Activated naive CD4-positive, alpha-beta T cell treated with anti-CD3 and anti-CD28 coated beads, Interleukin-2, amount 10 ng/mL, durations not matched to agents 7 days and 5 days (primary cell): ENCODE measurements at regions of chr12 and their contacts with region 1.

Region 1: DNA sequence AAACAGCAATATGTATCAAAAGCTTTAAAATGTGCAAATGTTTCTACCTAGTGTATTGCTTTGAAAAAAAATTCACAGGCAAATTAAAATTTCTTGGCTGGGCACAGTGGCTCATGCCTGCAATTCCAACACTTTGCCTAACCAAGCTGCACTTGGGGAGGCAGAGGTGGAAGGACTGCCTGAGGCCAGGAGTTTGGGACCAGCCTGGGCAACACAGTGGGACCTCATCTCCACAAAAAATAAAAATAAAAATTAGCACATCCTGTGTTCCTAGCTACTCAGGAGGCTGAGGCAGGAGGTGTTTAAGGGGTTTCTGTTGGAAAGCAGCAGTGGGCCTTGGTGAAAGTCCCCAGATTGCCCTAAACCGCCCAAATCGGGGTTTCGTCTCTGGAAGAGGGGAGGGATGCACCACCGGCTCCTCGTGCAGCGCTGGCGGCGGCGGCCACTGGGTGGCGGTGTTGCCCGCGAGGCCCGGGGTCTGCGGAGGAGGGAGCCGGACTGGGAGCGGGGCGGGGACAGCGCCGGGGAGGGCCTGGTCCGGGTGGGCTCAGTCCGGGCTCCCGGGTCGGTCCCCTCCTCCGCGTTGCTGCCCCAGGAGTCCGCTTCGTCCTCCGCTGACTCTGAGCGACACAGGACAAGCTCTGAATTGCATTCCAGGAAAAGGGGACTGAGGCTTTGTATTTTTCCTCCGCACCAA is 265.6 kb downstream of the AACS start:
- DNase-seq: peak; percentile 61
- H3K4me3 Mint-ChIP-seq: no peak overlapping the region
- H3K27ac Mint-ChIP-seq: no peak overlapping the region
- H3K4me1 Mint-ChIP-seq: no peaks in the 10 kb centered on the region
- H3K27me3 Mint-ChIP-seq: peaks cover 23% of the 10 kb centered on the region

Region 2: GRCh38 chr12:125183187-125184067 is 147.4 kb before region 1 on chr12:
- CTCF ChIA-PET with region 1: interaction called, 10 read pairs
- DNase-seq: peak; percentile 83
- H3K4me3 Mint-ChIP-seq: no peak overlapping the region
- H3K27ac Mint-ChIP-seq: no peak overlapping the region
- H3K4me1 Mint-ChIP-seq: peaks cover 4% of the 10 kb centered on the region
- H3K27me3 Mint-ChIP-seq: peaks cover 67% of the 10 kb centered on the region

Region 3: DNA sequence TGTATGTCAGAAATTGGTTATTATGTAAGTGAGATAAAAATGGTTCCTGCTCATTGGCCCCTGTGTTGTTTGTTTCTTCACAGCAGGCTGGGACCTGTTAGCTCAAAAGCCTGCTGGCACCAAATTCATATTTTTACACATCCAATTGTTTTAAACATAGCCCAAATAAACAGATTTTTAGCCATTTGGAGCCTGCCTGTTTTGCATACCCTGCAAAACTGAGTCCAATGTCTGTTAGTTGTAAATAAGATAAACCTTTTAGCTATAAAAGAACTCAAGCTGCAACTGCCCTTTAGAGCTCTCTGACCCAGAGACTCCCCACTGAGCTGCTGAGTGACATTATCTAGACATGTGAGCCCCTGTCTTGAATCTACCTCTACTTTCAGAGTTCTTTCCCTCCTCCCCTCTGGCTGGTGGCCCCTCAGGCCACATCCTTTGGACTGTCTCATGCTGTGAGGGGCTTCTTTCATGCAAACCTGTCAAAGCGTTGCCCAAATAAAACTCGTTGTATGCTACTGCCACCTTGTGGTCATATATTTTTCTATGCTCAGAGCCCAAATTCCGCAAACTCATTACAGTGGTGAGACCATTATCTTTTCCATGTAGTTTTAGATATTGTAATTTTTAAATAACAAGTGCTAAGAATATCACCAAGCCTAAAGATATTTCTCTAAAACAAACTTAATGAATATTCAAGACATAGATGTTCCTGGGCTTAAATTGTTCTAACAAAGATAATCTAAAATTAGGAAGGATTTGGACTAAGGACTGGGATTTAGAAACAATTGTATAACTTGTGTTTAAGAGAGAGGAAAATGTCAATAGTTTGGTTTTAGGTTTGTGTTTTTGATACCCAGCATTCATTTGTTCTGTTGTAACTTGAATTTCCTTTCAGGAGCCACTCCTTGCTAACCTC is 72.3 kb after region 1 on chr12:
- CTCF ChIA-PET with region 1: interaction called, 26 read pairs
- DNase-seq: no peak
- H3K4me3 Mint-ChIP-seq: no peak overlapping the region
- H3K27ac Mint-ChIP-seq: no peak overlapping the region
- H3K4me1 Mint-ChIP-seq: no peaks in the 10 kb centered on the region
- H3K27me3 Mint-ChIP-seq: peaks cover 3% of the 10 kb centered on the region